Activated CD4-positive, alpha-beta memory T cell treated with anti-CD3 and anti-CD28 coated beads, Interleukin-2, amount 10 ng/mL, durations not matched to agents 7 days and 5 days (primary cell): ENCODE measurements at regions of chr6 and their contacts with region 1.

Region 1: DNA sequence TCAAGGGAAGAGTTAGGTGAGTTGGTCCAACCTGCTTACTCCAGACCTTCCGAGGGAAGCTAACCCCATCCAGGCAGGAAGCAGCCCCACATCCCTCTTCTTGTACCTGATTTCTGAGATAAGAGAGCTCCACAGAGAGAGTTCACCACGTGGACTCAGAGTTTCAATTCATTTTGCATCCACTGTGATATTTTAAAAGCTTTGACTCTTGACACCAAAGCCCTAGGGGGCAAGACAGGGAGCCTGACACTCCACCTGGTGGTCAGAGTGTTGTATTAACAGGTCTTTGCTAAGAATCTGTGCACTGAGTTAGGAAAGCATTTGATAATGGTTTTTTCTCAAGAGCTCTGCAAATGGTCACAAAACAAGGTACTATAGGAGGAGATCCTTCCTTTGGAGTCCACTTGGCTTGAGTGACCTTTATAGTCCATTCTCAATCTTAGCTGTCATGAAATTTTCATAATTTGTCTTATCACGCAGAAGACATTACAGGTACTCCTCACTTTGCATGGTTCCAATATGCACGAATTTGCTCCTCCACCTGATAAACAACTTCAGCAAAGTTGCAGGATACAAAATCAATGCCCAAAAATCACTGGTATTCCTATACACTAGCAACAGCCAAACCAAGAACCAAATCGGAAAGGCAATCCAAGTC is 56.2 kb upstream of the RIPOR2 start:
- DNase-seq: peak; percentile 81
- H3K4me3 Mint-ChIP-seq: no peak overlapping the region
- H3K27ac Mint-ChIP-seq: peak overlapping the region; percentile 67
- H3K4me1 Mint-ChIP-seq: peaks cover 44% of the 10 kb centered on the region
- H3K27me3 Mint-ChIP-seq: no peaks in the 10 kb centered on the region

Region 2: DNA sequence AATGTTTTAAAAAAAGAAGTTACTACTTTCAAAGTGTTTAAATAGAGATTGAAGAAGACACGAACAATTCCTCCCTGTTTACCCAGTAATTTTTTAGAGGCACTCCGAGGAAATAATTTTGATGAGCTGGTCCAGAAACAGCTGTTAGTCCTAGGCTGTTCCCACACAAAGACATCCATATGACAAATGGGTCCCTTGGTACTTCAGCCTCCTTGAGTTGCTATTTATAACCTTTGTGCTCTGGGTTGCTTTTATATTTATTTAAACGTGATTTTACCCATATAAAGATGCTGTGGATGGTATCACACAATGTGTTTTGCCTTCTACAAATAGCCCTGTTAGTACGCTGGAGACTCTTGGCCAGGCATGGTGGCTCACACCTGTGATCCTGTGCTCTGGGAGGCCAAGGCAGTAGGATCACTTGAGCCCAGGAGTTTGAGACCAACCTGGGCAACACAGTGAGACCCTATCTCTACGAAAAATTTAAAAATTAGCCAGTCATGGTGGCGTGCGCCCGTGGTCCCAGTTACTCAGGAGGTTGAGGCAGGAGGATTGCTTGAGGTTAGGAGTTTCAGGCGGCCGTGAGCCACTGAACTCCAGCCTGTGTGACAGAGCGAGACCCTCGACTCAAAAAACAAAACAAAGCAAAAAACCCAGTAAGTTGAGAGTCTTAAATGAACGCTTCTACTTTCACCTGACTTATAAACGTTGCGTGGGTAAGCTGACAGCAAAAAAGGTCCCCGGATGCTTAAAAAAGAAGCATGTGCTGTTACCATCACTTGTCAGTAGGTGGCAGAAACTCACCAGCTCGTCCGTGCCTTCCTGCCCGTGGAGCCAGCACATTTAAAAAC is 136.3 kb before region 1 on chr6:
- CTCF ChIA-PET with region 1: interaction called, 101 read pairs
- POLR2A ChIA-PET with region 1: interaction called, 32 read pairs
- DNase-seq: peak; percentile 75
- H3K4me3 Mint-ChIP-seq: no peak overlapping the region
- H3K27ac Mint-ChIP-seq: peak overlapping the region; percentile 90
- H3K4me1 Mint-ChIP-seq: peaks cover 55% of the 10 kb centered on the region
- H3K27me3 Mint-ChIP-seq: no peaks in the 10 kb centered on the region

Region 3: GRCh38 chr6:24905483-24905882 is 86.5 kb before region 1 on chr6:
- CTCF ChIA-PET with region 1: interaction called, 73 read pairs
- POLR2A ChIA-PET with region 1: interaction called, 47 read pairs
- DNase-seq: no peak
- H3K4me3 Mint-ChIP-seq: no peak overlapping the region
- H3K27ac Mint-ChIP-seq: no peak overlapping the region
- H3K4me1 Mint-ChIP-seq: peaks cover 84% of the 10 kb centered on the region
- H3K27me3 Mint-ChIP-seq: no peaks in the 10 kb centered on the region

Region 4: GRCh38 chr6:24924580-24925356 is 67.2 kb before region 1 on chr6:
- CTCF ChIA-PET with region 1: interaction called, 36 read pairs
- POLR2A ChIA-PET with region 1: interaction called, 26 read pairs
- DNase-seq: no peak
- H3K4me3 Mint-ChIP-seq: peak overlapping the region; percentile 26
- H3K27ac Mint-ChIP-seq: peak overlapping the region; percentile 57
- H3K4me1 Mint-ChIP-seq: peaks cover 87% of the 10 kb centered on the region
- H3K27me3 Mint-ChIP-seq: peaks cover 3% of the 10 kb centered on the region

Region 5: GRCh38 chr6:24968786-24969185 is 23.2 kb before region 1 on chr6:
- CTCF ChIA-PET with region 1: interaction called, 22 read pairs
- POLR2A ChIA-PET with region 1: interaction called, 7 read pairs
- DNase-seq: no peak
- H3K4me3 Mint-ChIP-seq: no peak overlapping the region
- H3K27ac Mint-ChIP-seq: no peak overlapping the region
- H3K4me1 Mint-ChIP-seq: peaks cover 36% of the 10 kb centered on the region
- H3K27me3 Mint-ChIP-seq: no peaks in the 10 kb centered on the region

Region 6: DNA sequence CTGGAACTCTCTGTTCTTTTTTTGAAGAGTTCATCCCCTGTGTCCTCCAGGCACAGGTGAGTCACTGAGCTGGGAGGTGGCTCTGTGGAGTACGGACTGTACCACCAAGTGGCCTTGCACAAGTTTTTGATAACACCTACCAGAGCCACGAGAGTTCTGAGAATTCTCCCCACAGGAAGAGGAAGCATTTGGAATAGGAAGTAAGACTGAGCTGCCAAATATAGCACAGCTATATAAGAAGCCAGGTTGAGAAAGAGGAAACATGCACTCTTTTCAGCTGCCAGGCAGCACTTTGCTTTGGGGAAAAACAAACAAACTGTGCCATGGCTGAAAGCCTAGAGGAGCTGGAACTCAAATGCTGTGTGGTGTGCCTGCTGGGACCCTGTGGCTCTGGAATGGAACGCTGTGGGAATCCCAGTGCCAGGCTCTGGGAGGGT is 14.6 kb after region 1 on chr6:
- CTCF ChIA-PET with region 1: interaction called, 23 read pairs
- POLR2A ChIA-PET with region 1: interaction called, 17 read pairs
- DNase-seq: peak; percentile 75
- H3K4me3 Mint-ChIP-seq: peak overlapping the region; percentile 50
- H3K27ac Mint-ChIP-seq: peak overlapping the region; percentile 92
- H3K4me1 Mint-ChIP-seq: peaks cover 79% of the 10 kb centered on the region
- H3K27me3 Mint-ChIP-seq: no peaks in the 10 kb centered on the region

Region 7: DNA sequence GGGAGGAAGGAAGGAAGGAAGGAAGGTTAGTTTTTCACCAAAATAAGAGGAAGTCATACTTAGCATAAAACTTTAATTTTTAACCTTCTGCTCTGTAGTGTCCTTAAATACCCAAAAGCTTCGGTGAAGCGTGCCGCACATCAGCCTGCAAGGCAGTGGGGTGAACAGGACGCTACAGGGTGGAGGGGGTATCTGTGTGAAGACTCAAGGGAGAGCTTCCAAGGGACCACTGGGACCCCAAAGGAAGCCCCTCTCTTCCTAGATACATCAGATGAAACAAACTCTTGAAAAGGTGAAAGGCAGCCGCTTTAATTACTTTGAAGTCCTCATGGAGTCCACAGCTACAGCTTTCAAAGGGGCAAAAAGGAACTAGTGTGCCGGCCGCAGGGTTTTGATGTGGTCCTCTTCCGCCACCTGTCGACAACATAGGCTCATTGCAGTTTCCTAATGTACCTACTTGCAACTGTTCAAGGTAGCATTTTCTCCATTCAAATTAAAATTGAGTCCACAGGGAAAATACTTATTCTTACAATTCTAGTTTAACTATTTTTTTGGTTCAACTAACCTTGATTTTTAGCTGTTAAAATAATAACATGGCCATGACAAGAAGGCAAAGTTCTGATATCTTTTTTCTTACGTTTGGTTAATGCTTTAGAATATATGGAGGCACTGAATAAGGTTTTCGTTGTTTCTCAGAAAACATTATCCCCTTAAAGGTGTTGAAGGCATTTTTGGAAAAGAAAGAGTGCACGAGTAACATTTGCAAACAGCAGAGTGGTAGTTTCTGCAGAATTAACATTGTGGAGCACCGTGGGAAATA is 78.8 kb after region 1 on chr6:
- CTCF ChIA-PET with region 1: interaction called, 19 read pairs
- POLR2A ChIA-PET with region 1: no interaction called
- DNase-seq: peak; percentile 87
- H3K4me3 Mint-ChIP-seq: no peak overlapping the region
- H3K27ac Mint-ChIP-seq: peak overlapping the region; percentile 81
- H3K4me1 Mint-ChIP-seq: peaks cover 8% of the 10 kb centered on the region
- H3K27me3 Mint-ChIP-seq: peaks cover 2% of the 10 kb centered on the region